HAP-1 (cell line): ENCODE measurements at regions of chr20 and their contacts with region 1.

Region 1: DNA sequence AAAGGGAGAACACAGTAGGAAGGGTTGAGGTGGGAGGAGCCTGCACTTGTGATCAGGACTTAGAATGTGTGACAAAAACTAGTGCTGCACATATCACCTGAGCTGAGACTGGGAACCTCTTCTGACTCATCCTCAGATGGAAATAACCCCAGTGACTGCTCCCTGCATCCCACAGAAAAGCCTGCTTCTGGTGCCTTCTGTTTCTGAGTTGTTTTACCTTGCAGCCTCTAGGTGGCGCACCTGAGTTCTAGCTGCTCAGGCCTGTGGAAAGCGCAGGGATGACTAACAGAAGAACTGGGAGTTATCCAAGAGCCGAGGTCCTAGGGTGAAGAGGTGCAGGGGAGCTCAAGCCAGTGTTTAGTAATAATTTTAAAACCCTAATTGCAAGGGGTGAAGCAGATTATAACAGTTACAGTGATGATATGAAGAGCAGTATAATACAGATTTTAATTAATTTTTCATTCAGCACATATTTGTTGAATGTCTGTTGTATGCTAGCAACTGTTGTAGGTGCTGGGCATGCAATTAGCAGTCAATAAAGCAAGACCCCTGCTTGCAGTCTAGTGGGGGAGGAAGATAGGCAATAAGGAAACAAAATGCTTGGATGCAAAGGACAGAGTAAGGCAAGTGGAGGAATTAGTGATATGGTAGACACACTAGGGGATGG is 302.5 kb downstream of the DHX35 start:
- DNase-seq: peak; percentile 37 to 64
- H3K4me3 ChIP-seq: no peak overlapping the region
- H3K4me1 ChIP-seq: no peaks in the 10 kb centered on the region
- H3K27me3 ChIP-seq: no peaks in the 10 kb centered on the region

Region 2: DNA sequence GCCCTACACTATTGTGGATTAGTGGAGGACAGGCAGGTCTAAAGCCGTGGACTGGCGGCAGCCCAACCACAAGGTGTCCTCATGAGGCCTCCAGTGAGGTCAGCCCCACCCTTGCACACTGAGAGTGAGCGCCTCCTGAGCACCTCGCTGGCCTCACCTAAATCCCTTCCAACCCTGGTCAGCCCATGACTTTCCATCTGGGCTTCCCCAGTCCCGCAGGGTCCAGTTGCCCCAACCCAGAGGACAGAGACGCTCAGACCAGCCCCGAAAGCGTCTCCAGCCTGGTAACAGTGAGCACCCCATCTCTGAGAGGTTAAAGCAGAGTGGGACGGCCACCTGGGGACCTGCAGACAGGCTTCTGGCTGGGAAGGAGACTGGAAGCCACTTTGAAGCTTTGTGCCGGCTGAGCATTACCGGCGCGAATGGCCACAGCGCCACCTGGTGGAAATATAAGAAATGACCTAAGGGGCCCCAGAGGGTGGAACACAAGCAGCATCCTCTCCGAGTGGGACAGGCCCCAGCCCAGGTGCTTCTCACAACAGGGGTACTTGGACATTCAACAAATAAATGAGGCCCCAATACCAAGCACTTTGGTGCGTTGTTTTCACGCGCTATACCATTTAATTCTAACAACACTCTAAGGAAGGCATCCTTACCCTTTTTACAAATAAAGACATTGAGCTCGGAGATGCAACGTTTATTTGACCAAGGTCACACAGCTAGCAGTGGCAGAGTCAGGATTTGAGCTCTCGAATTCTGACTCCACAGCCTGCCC is 1698.3 kb after region 1 on chr20:
- in situ Hi-C with region 1: loop called (anchors 25 kb)
- DNase-seq: peak; percentile 39 to 81
- H3K4me3 ChIP-seq: no peak overlapping the region
- H3K4me1 ChIP-seq: no peaks in the 10 kb centered on the region
- H3K27me3 ChIP-seq: no peaks in the 10 kb centered on the region